ENCODE measurements at regions of chr4 and their contacts with region 1.

Region 1: GRCh38 chr4:52019936-52020657 is at the start of gene LRRC66:
- DNase-seq: peak in 1 of 5 donors; percentile 33
- ATAC-seq: peak in 2 of 4 donors; percentile 38 to 45
- H3K4me3 ChIP-seq: no peak within 1 kb of the TSS
- H3K27ac ChIP-seq: no peak within 1 kb of the TSS
- H3K4me1 ChIP-seq: peaks cover 0 to 7% (median 0%) of the 10 kb centered on the region in 12 donors
- H3K27me3 ChIP-seq: no peaks in the 10 kb centered on the region
- CTCF ChIP-seq: no peak
- POLR2A ChIP-seq: no peak
- total RNA-seq, gene LRRC66: 0.12 to 0.56 (median 0.27) TPM

Region 2: GRCh38 chr4:51836549-51836948 is 183.5 kb before region 1 on chr4:
- intact Hi-C with region 1: loop called in 3 of 10 experiments (anchors 2 to 5 kb)
- DNase-seq: no peak
- ATAC-seq: peak in 2 of 4 donors; percentile 29 to 30
- H3K4me3 ChIP-seq: no peak overlapping the region
- H3K27ac ChIP-seq: no peak overlapping the region
- H3K4me1 ChIP-seq: no peaks in the 10 kb centered on the region
- H3K27me3 ChIP-seq: no peaks in the 10 kb centered on the region
- CTCF ChIP-seq: no peak
- POLR2A ChIP-seq: no peak

Region 3: GRCh38 chr4:51885363-51885762 is 134.7 kb before region 1 on chr4:
- intact Hi-C with region 1: loop called in 3 of 10 experiments (anchors 5 to 10 kb)
- DNase-seq: no peak
- ATAC-seq: peak in 2 of 4 donors; percentile 34 to 37
- H3K4me3 ChIP-seq: no peak overlapping the region
- H3K27ac ChIP-seq: no peak overlapping the region
- H3K4me1 ChIP-seq: no peaks in the 10 kb centered on the region
- H3K27me3 ChIP-seq: no peaks in the 10 kb centered on the region
- CTCF ChIP-seq: peak in 10 of 12 donors; percentile 10 to 49 (median 32)
- POLR2A ChIP-seq: no peak

Measured in heart left ventricle (tissue), 16 donors.